Sigmoid colon (tissue), 7 donors: ENCODE measurements at regions of chr12 and their contacts with region 1.

Region 1: DNA sequence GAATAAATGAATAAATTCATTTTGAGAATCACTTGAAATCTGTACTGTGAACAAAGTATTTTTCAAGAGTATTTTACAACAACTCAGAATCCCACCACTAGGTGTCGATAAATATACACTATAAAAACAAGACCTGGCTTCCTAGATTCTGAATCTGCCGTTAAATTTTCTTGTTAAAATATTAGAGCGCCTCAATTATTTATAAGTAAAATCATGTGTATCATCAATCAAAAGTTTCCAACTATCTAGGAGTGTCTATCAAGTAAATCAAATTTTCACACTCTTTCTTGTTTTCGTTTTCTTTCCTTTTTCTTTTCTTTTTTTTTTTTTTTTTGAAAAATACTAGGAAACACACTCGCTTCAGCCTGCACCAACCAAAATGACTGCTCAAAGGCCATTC is 179.2 kb upstream of the DCN start:
- DNase-seq: no peak
- H3K4me3 ChIP-seq: no peak overlapping the region
- H3K27ac ChIP-seq: no peak overlapping the region
- H3K4me1 ChIP-seq: peaks cover 0 to 3% (median 0%) of the 10 kb centered on the region in 4 donors
- H3K27me3 ChIP-seq: no peaks in the 10 kb centered on the region
- CTCF ChIP-seq: peak; percentile 37 to 61 (median 52)
- EP300 ChIP-seq: no peak
- POLR2A ChIP-seq: no peak

Region 2: DNA sequence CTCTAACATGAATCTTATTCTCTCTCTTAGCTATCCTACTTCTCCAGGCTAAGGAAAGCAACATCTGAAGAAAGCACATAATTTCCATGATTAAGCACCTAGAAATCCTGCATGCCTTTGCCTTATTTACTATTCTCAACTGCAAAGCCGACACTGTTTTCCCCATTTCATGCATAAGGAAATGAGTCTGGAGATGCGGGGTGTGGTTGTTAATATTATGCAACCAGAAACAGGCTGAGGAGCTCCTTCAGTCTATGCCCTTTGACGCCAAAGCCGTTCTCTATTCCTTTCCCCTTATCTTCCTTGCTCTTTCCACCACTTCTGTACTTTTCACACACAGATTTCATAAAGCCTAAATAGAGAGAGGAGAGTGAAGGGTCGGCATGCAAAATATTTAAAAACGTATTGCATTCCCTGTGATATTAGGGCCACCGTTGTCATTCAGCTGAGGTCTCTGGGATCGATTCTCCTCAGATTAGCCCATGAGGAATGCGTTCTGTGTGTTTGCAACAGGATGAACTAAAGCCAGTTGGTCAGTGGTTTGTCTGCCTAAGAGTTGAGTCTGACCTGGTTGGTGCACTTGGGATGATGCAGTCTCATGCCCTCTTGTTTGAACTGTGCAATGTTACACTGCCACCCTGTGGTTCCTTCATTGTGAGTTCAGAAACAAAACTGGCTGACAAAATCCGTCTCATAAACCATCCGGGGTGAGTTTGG is 1287.8 kb after region 1 on chr12:
- intact Hi-C with region 1: loop called (anchors 1 kb)
- DNase-seq: peak; percentile 71
- H3K4me3 ChIP-seq: no peak overlapping the region
- H3K27ac ChIP-seq: no peak overlapping the region
- H3K4me1 ChIP-seq: peaks cover 0 to 5% (median 0%) of the 10 kb centered on the region in 4 donors
- H3K27me3 ChIP-seq: no peaks in the 10 kb centered on the region
- CTCF ChIP-seq: peak; percentile 53 to 66 (median 64)
- EP300 ChIP-seq: no peak
- POLR2A ChIP-seq: no peak